Gastrocnemius medialis (tissue), 4 donors: ENCODE measurements at regions of chr6 and their contacts with region 1.

Region 1: GRCh38 chr6:17392978-17393891 is at the start of gene CAP2:
- DNase-seq: peak; percentile 72 to 87
- ATAC-seq: peak; percentile 84 to 85
- H3K4me3 ChIP-seq: peak within 1 kb of the TSS; percentile 80 to 86 (median 80)
- H3K27ac ChIP-seq: peak within 1 kb of the TSS; percentile 96 to 97 (median 96)
- H3K4me1 ChIP-seq: peaks cover 11 to 39% of the 10 kb centered on the region in 2 donors
- H3K27me3 ChIP-seq: no peaks in the 10 kb centered on the region
- CTCF ChIP-seq: no peak
- POLR2A ChIP-seq: peak; percentile 90
- total RNA-seq, gene CAP2: 208 to 439 (median 295) TPM

Region 2: GRCh38 chr6:17167327-17167979 is 225.8 kb before region 1 on chr6:
- in situ Hi-C with region 1: no loop called
- intact Hi-C with region 1: loop called (anchors 5 kb)
- DNase-seq: peak; percentile 35 to 81
- ATAC-seq: peak; percentile 43 to 75
- H3K4me3 ChIP-seq: no peak overlapping the region
- H3K27ac ChIP-seq: peak overlapping the region; percentile 80 to 92 (median 90)
- H3K4me1 ChIP-seq: peaks cover 26 to 27% of the 10 kb centered on the region in 2 donors
- H3K27me3 ChIP-seq: no peaks in the 10 kb centered on the region
- CTCF ChIP-seq: peak; percentile 51 to 72 (median 60)
- POLR2A ChIP-seq: peak in 1 of 2 donors; percentile 11

Region 3: GRCh38 chr6:17289630-17290061 is 103.6 kb before region 1 on chr6:
- in situ Hi-C with region 1: loop called in 1 of 4 experiments (anchors 10 kb)
- intact Hi-C with region 1: loop called (anchors 5 kb)
- DNase-seq: peak; percentile 96 to 99
- ATAC-seq: peak; percentile 85 to 87
- H3K4me3 ChIP-seq: peak overlapping the region; percentile 38 to 94 (median 62)
- H3K27ac ChIP-seq: peak overlapping the region; percentile 93 to 100 (median 96)
- H3K4me1 ChIP-seq: peaks cover 23 to 81% of the 10 kb centered on the region in 2 donors
- H3K27me3 ChIP-seq: no peaks in the 10 kb centered on the region
- CTCF ChIP-seq: peak in 1 of 5 experiments; percentile 16
- POLR2A ChIP-seq: peak; percentile 64 to 83

Region 4: GRCh38 chr6:17318435-17319165 is 74.6 kb before region 1 on chr6:
- in situ Hi-C with region 1: loop called in 1 of 4 experiments (anchors 10 kb)
- intact Hi-C with region 1: loop called (anchors 1 kb)
- DNase-seq: peak; percentile 75 to 89
- ATAC-seq: peak; percentile 98
- H3K4me3 ChIP-seq: no peak overlapping the region
- H3K27ac ChIP-seq: peak overlapping the region; percentile 88 to 97 (median 94)
- H3K4me1 ChIP-seq: peaks cover 24 to 32% of the 10 kb centered on the region in 2 donors
- H3K27me3 ChIP-seq: no peaks in the 10 kb centered on the region
- CTCF ChIP-seq: no peak
- POLR2A ChIP-seq: peak; percentile 51 to 74

Region 5: GRCh38 chr6:17417817-17418216 is 24.6 kb after region 1 on chr6:
- in situ Hi-C with region 1: no loop called
- intact Hi-C with region 1: loop called (anchors 2 kb)
- DNase-seq: no peak
- ATAC-seq: peak in 1 of 2 donors; percentile 21
- H3K4me3 ChIP-seq: peak overlapping the region in 3 of 4 donors; percentile 8 to 24 (median 10)
- H3K27ac ChIP-seq: peak overlapping the region; percentile 96 to 98 (median 96)
- H3K4me1 ChIP-seq: peaks cover 65 to 72% of the 10 kb centered on the region in 2 donors
- H3K27me3 ChIP-seq: no peaks in the 10 kb centered on the region
- CTCF ChIP-seq: no peak
- POLR2A ChIP-seq: no peak

Region 6: DNA sequence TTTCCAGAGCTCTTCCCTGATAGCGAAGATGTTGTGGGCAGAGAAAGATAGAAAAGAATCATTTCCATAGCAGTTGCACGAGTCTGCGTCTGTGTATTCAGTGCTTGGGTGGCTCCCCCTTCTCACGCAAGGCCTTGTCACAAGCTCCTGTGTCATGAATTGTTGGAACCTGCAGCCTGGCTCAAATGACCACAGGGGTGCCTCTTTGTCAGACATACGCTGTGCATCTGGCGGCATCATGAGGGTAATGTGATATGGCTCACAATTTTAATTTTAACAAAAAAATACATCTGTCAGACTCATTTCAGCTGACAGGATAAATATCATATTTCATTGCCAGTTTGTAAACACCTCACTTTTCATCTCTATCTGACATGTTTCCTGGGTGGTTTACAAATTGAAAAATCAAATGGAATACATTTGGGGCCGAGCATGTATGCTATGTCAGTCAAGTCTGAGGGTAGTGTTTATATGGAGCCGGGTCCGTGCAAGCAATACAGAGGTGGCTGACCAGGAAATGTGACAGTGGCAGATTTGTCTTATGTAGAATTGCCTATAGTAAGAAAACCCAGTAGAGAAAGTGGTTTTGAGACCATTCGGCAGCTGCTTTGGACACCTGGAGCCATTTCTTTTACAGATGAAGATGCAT is 91.1 kb after region 1 on chr6:
- in situ Hi-C with region 1: loop called in 1 of 4 experiments (anchors 10 kb)
- intact Hi-C with region 1: no loop called
- DNase-seq: peak; percentile 89 to 91
- ATAC-seq: peak; percentile 92 to 95
- H3K4me3 ChIP-seq: peak overlapping the region in 1 of 4 donors; percentile 23
- H3K27ac ChIP-seq: peak overlapping the region; percentile 93 to 98 (median 95)
- H3K4me1 ChIP-seq: peaks cover 45 to 47% of the 10 kb centered on the region in 2 donors
- H3K27me3 ChIP-seq: no peaks in the 10 kb centered on the region
- CTCF ChIP-seq: no peak
- POLR2A ChIP-seq: peak; percentile 61 to 71